ENCODE measurements at regions of chr10 and their contacts with region 1.

Region 1: GRCh38 chr10:109922976-109923921 is at the start of gene XPNPEP1:
- DNase-seq: peak; percentile 89 to 90
- ATAC-seq: peak; percentile 96 to 99 (median 98)
- H3K4me3 ChIP-seq: peak within 1 kb of the TSS; percentile 71 to 99 (median 92)
- H3K27ac ChIP-seq: peak within 1 kb of the TSS; percentile 81 to 99 (median 97)
- H3K4me1 ChIP-seq: peaks cover 3 to 47% (median 21%) of the 10 kb centered on the region in 9 donors
- H3K27me3 ChIP-seq: no peaks in the 10 kb centered on the region
- CTCF ChIP-seq: no peak
- total RNA-seq, gene XPNPEP1: 35.8 to 51.6 (median 43.5) TPM

Region 2: DNA sequence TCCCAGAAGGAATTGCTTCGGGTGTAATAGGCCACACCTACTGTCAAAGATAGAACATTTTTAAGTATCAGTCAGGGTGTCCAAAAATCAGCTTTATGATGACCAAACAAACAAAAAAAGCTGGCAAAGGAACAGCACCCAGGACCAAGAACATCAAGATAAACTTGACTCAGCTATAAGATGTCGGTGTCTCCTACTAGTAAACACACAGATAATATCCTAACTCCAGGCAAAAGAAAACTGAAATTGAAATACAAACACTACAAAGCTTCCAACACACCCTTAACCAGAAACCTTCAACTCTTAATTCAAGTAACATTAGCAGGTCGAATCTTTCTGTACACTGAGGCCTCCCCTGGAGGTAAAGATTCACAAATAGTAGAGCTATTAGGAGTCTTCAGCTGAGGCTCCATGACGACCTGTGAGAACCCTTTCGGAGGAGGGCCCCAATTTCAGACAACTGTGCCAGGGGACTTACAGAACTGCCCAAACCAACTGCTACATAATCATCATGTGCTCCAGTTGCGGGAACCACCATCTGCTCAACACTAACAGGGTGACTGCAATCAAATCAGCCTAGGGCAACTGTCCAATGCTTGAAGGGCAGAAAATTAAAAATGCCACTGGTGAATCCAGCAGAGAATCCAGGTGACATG is 20.2 kb before region 1 on chr10:
- intact Hi-C with region 1: loop called in 1 of 10 experiments (anchors 2 kb)
- DNase-seq: no peak
- ATAC-seq: peak in 4 of 8 donors; percentile 24 to 46 (median 35)
- H3K4me3 ChIP-seq: no peak overlapping the region
- H3K27ac ChIP-seq: peak overlapping the region; percentile 29 to 85 (median 66)
- H3K4me1 ChIP-seq: peaks cover 13 to 67% (median 55%) of the 10 kb centered on the region in 9 donors
- H3K27me3 ChIP-seq: no peaks in the 10 kb centered on the region
- CTCF ChIP-seq: no peak

Region 3: DNA sequence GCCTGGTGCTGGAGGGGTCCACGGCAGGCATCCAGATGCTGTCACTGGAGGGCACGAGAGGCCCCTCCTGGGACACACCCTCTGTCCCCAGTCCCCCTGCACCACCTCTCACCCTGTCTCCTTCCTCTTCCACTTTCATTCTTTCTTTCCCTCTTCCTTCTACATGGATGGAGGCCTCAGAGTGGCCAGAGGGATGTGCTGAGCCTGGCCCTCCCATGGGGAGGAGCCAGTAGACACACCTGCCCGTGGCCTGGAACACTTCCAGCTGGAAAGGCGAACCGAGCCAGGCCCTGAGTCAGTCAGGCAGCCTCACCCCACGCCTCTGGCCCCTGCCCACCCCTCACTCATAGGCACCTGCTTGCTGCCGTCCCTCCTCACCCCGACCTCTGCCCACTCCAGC is 228.2 kb after region 1 on chr10:
- intact Hi-C with region 1: no loop called
- DNase-seq: no peak
- ATAC-seq: peak in 3 of 8 donors; percentile 14 to 20 (median 20)
- H3K4me3 ChIP-seq: no peak overlapping the region
- H3K27ac ChIP-seq: no peak overlapping the region
- H3K4me1 ChIP-seq: peaks cover 0 to 12% (median 0%) of the 10 kb centered on the region in 9 donors
- H3K27me3 ChIP-seq: peaks cover 0 to 36% (median 0%) of the 10 kb centered on the region in 7 donors
- CTCF ChIP-seq: no peak

Measured in heart right ventricle (tissue), 16 donors.